ENCODE measurements at regions of chr14 and their contacts with region 1.

Region 1: DNA sequence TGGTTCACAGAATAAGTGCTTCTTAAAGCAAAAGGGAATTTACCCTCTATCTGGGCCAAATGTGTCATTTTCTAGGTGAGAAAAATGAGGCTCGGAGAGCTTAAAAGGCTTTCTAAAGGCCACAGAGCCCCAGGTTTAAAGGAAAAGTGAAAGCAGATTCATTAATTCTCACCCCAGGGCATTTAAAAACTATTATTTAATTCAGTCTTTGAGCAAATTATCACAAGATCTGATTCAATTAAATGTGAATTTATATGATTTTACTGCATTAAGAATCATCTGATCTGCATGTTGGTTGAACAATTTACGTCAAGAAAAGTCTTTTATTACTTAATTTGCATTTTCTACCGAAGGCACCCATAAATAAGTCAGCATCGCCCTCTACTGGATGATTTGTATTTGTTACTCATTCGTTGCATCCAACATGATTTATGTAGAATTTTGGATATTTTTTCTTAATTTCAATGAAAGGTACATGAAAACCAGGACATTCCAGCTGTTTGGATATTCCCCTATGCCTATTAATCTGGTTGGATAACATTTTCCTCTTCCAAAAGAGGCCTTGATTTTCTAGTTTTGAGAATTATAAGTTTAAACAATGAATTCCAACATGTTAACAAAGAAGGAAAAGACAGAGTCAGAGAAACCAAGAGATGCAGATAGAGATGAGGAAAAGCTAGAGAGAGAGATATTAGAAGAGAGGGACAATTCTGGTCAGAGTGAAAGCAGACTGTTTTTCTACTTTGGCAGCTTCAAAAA is 19.1 kb upstream of the DHRS7 start:
- DNase-seq: no peak
- ATAC-seq: peak; percentile 56
- H3K4me3 Mint-ChIP-seq: peak overlapping the region; percentile 82
- H3K27ac Mint-ChIP-seq: peak overlapping the region; percentile 87
- H3K4me1 Mint-ChIP-seq: peaks cover 17% of the 10 kb centered on the region
- H3K27me3 Mint-ChIP-seq: no peaks in the 10 kb centered on the region
- CTCF ChIP-seq: peak; percentile 89

Region 2: DNA sequence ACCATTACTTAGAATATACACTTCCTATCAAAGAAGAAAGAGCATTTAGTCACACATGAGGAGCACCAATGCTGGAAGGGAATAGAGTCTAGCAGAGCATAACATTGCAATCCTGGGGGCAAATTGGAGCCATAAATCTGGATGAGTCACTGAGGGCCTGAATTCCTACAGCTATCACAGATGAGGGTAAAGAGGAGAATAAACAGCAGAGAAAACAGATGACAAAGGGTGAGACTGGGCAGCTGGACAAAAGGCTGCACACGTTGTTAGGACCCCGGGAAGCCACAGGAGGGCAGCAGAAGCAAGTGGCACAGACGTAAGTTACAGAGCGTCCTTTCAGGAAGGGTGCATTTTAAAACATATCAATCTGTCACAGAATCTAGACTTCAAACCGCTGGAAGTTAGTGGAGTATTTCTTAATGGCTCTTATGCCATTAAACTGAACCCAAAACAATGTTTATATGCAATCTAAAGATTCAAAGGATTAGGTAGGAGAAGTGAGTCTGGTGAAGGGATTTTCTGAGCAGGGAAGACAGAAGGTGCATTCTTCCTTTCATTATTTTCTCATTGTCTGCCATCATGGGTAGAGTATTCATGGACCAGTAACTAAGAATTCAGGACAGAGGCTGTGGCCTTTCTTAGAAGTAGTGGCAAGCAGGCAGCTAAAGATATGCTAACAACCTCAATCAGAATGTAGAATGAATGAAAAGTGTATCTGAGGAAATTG is 1155.7 kb before region 1 on chr14:
- CTCF ChIA-PET with region 1: no interaction called
- POLR2A ChIA-PET with region 1: no interaction called
- intact Hi-C with region 1: loop called (anchors 5 kb)
- DNase-seq: no peak
- ATAC-seq: no peak
- H3K4me3 Mint-ChIP-seq: no peak overlapping the region
- H3K27ac Mint-ChIP-seq: no peak overlapping the region
- H3K4me1 Mint-ChIP-seq: peaks cover 6% of the 10 kb centered on the region
- H3K27me3 Mint-ChIP-seq: peaks cover 11% of the 10 kb centered on the region
- CTCF ChIP-seq: no peak

Region 3: GRCh38 chr14:59576332-59577294 is 607.7 kb before region 1 on chr14 and contains the start of gene CCDC175:
- CTCF ChIA-PET with region 1: interaction called, 3 read pairs
- POLR2A ChIA-PET with region 1: no interaction called
- intact Hi-C with region 1: loop called (anchors 5 kb)
- DNase-seq: peak; percentile 68
- ATAC-seq: peak; percentile 94
- H3K4me3 Mint-ChIP-seq: peak within 1 kb of the TSS; percentile 70
- H3K27ac Mint-ChIP-seq: no peak within 1 kb of the TSS
- H3K4me1 Mint-ChIP-seq: peaks cover 8% of the 10 kb centered on the region
- H3K27me3 Mint-ChIP-seq: peaks cover 11% of the 10 kb centered on the region
- CTCF ChIP-seq: no peak
- total RNA-seq, gene CCDC175: not detected in 2 replicates

Region 4: GRCh38 chr14:60064491-60065072 is 119.7 kb before region 1 on chr14:
- CTCF ChIA-PET with region 1: interaction called, 92 read pairs
- POLR2A ChIA-PET with region 1: no interaction called
- intact Hi-C with region 1: loop called (anchors 1 kb)
- DNase-seq: no peak
- ATAC-seq: peak; percentile 57
- H3K4me3 Mint-ChIP-seq: no peak overlapping the region
- H3K27ac Mint-ChIP-seq: no peak overlapping the region
- H3K4me1 Mint-ChIP-seq: no peaks in the 10 kb centered on the region
- H3K27me3 Mint-ChIP-seq: peaks cover 4% of the 10 kb centered on the region
- CTCF ChIP-seq: peak; percentile 54

Region 5: GRCh38 chr14:60622917-60623257 is 438.6 kb after region 1 on chr14:
- CTCF ChIA-PET with region 1: no interaction called
- POLR2A ChIA-PET with region 1: no interaction called
- intact Hi-C with region 1: no loop called
- DNase-seq: no peak
- ATAC-seq: no peak
- H3K4me3 Mint-ChIP-seq: no peak overlapping the region
- H3K27ac Mint-ChIP-seq: no peak overlapping the region
- H3K4me1 Mint-ChIP-seq: peaks cover 5% of the 10 kb centered on the region
- H3K27me3 Mint-ChIP-seq: peaks cover 17% of the 10 kb centered on the region
- CTCF ChIP-seq: no peak

Measured in activated B cell treated with CpG ODN at 0.5 μM for 24 hours (primary cell).